ENCODE measurements at regions of chr18 and their contacts with region 1.

Region 1: DNA sequence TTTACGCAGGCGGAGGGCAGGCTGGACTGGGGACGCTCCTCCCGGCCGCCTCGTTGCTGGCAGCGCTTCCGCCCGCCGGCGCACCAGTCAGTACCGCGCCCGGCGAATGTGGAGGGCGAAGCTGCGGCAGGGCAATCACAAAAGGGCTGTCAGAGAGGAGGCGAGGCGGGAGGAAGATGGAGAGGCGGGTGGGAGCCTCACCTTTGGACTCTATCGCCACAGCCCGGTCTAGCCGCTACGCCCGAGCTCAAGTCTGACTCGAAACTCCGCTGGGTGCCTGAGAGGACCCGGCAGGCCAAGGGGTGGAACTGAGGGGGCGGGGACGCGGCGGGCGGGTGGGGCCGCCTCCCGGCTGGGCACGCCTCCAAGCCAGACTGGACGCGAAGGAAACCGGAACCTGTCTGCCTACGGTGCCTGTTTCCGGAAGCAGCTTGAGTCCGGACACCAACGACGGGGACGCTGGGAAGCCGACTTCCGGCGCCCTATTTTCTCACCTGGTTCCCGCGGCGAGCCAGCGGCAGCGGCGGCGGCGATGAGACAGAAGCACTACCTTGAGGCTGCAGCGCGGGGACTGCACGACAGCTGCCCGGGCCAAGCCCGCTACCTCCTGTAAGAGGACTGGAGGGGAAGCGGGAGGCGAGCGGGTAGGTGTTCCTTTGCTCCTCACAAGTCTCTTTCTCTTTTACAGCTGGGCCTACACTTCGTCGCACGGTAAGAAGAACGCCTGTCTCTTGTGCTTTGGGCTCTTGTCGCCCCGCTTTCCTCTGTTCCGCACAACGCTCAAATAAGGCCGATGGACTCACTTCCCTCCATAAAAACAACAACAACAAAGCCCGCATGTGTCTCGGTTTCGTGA is at the start of gene RMP24:
- DNase-seq: peak; percentile 96
- ATAC-seq: peak; percentile 98
- H3K4me3 ChIP-seq: peak within 1 kb of the TSS; percentile 91
- H3K27ac ChIP-seq: peak within 1 kb of the TSS; percentile 85
- H3K4me1 ChIP-seq: peaks cover 5% of the 10 kb centered on the region
- H3K27me3 ChIP-seq: no peaks in the 10 kb centered on the region
- CTCF ChIP-seq: no peak
- POLR2A ChIP-seq: peak; percentile 82
- RAD21 ChIP-seq: no peak

Region 2: DNA sequence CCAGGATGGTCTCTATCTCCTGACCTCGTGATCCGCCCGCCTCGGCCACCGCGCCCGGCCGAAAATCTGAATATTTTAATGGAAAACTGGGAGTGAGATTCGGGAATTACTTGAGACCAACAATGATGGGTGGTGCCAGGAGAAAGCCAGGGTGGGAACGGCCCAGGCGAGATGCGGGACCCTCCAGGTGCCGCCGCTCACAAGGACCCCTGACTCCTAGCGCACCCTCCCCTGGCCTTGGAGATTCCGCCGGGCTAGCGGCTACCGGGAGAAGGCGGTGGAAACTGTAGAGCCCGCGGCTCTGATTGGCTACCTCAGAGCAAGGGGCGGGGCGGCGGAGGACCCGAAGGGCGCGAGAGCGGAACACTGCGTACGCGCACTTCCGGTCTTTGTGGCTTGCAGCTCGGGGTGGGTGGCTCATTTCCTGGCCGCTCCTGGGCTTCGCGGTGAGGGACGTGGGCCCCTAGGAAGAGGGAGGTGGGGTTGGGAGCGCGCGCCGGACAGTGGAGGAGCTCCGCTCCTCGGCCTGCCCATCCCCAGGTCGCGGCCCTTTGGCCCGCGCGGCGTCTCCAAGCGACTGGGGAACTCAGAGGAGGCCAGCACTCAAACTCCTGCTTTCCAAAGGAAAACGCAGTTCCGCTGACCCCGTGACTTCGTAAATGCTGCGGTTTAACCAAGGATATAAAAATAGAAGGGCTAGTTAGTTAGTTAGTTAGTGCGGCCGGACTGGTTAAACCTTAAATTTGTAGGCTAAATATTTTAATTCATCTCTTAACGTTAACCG is 731.6 kb before region 1 on chr18 and contains the start of gene ZNF397:
- CTCF ChIA-PET with region 1: no interaction called
- POLR2A ChIA-PET with region 1: no interaction called
- dilution Hi-C with region 1: no loop called
- in situ Hi-C with region 1: loop called (anchors 25 kb)
- intact Hi-C with region 1: no loop called
- DNase-seq: peak; percentile 96
- ATAC-seq: peak; percentile 100
- H3K4me3 ChIP-seq: peak within 1 kb of the TSS; percentile 53
- H3K27ac ChIP-seq: peak within 1 kb of the TSS; percentile 96
- H3K4me1 ChIP-seq: peaks cover 2% of the 10 kb centered on the region; the same call in 1 of the 2 replicates
- H3K27me3 ChIP-seq: no peaks in the 10 kb centered on the region
- CTCF ChIP-seq: no peak
- POLR2A ChIP-seq: peak; percentile 96
- RAD21 ChIP-seq: no peak
- total RNA-seq, gene ZNF397: 9.9 and 11.1 TPM in 2 replicates

Region 3: DNA sequence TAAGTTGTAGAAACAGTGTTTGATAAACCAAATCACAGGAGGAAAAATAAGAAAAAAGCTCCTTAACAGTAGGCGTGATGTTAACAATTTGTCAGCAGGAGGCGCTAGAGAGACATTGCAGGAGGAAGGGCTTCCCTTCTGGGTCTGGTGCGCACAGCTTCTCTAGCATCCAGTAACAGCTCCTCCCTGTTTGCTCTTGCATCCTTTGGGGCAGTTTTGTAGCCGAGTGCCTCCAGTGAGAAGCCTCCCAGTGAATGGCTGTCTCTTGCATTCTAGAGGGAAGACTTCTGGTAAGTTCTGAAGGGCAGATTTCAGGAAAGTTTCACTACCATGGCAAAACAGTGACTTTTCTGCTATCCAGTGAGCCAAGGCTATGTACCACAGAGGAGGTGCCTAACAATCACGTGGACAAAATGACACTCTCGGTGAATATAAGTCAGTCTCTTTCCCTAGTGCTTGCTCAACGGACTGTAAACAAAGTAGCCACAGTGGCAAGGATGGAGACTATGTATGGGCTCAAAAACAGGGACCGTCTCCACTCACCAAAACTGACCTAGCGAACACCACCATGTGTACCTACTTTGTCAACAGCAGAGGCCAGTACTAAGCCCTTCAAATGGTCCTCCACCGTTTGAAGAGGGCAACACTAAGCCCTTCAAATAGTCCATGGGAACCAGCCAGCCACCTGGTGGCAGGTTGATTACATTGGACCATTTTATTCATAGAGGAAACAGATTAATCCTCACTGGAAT is 585.6 kb before region 1 on chr18:
- CTCF ChIA-PET with region 1: no interaction called
- POLR2A ChIA-PET with region 1: no interaction called
- dilution Hi-C with region 1: no loop called
- in situ Hi-C with region 1: loop called (anchors 25 kb)
- intact Hi-C with region 1: no loop called
- DNase-seq: peak; percentile 82
- ATAC-seq: peak; percentile 90
- H3K4me3 ChIP-seq: no peak overlapping the region
- H3K27ac ChIP-seq: no peak overlapping the region
- H3K4me1 ChIP-seq: no peaks in the 10 kb centered on the region; the same call in 1 of the 2 replicates
- H3K27me3 ChIP-seq: peaks cover 5% of the 10 kb centered on the region
- CTCF ChIP-seq: peak; percentile 89
- POLR2A ChIP-seq: no peak
- RAD21 ChIP-seq: peak; percentile 74

Region 4: DNA sequence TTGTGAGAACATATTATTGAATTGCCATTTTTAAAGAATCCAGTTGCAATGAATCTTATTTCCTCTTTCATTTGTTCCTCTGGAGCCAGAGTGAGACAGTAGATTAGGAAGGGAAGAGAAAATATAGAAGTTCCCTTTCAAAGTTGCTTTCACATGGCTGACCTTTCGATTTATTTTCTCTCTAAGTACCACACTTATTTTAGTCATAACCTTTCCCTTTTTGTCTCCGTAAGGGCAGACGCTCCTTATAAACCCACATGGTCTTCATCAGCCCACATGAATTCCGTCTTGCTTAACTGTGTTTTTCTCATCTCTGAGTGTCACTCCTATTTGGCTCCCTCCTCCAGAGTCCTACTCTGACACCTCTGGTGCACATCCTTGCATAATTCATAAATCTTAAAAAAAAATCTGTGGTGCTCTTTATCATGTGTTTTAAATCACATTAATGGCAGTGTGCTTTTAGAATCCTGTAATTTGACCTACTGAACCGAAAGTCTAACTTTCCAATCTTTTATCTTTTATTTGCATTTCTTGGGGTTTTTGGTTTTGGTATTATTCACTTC is 556.8 kb before region 1 on chr18:
- CTCF ChIA-PET with region 1: no interaction called
- POLR2A ChIA-PET with region 1: no interaction called
- dilution Hi-C with region 1: no loop called
- in situ Hi-C with region 1: no loop called
- intact Hi-C with region 1: no loop called
- DNase-seq: peak; percentile 5
- ATAC-seq: no peak; the same call in none of the 2 replicates
- H3K4me3 ChIP-seq: no peak overlapping the region
- H3K27ac ChIP-seq: no peak overlapping the region
- H3K4me1 ChIP-seq: no peaks in the 10 kb centered on the region
- H3K27me3 ChIP-seq: peaks cover 13% of the 10 kb centered on the region
- CTCF ChIP-seq: no peak
- POLR2A ChIP-seq: no peak
- RAD21 ChIP-seq: no peak

Region 5: GRCh38 chr18:35432565-35433001 is 539.8 kb before region 1 on chr18:
- CTCF ChIA-PET with region 1: no interaction called
- POLR2A ChIA-PET with region 1: interaction called, 12 read pairs
- dilution Hi-C with region 1: no loop called
- in situ Hi-C with region 1: no loop called
- intact Hi-C with region 1: no loop called
- DNase-seq: no peak
- ATAC-seq: no peak
- H3K4me3 ChIP-seq: no peak overlapping the region
- H3K27ac ChIP-seq: no peak overlapping the region
- H3K4me1 ChIP-seq: no peaks in the 10 kb centered on the region; the same call in 1 of the 2 replicates
- H3K27me3 ChIP-seq: peaks cover 2% of the 10 kb centered on the region
- CTCF ChIP-seq: no peak
- POLR2A ChIP-seq: no peak
- RAD21 ChIP-seq: no peak

Region 6: DNA sequence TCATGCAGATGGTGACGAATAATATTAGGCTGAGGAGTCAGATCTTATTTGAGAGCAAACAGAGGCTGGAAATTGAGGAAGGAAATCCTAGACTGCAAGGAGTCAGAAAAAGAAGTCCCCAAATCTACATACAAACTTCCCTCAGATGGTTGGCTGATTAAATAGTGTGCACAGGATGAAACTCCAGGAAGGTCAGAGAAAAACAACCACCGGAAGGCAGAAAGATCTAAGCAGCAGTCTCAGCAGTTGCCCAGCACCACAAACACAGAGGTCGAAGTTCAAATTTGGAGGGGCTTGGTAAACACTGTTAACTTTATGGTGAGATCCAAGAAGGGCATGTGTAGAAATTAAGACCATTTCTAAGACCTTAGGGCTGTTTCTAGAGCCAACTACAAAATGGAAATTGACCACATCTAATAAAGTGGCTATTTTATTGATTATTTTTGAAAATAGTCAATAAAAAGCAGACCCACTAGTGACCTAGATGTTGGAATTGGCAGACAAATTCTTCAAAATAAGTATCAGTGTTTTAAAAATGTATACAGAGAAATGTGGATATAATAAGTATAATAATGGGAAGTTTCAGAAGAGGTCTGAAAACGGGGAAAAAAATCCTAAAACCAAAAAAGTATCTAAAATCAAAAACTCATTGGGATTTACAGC is 256.1 kb before region 1 on chr18:
- CTCF ChIA-PET with region 1: no interaction called
- POLR2A ChIA-PET with region 1: interaction called, 10 read pairs
- dilution Hi-C with region 1: no loop called
- in situ Hi-C with region 1: no loop called
- intact Hi-C with region 1: no loop called
- DNase-seq: no peak
- ATAC-seq: no peak
- H3K4me3 ChIP-seq: no peak overlapping the region
- H3K27ac ChIP-seq: no peak overlapping the region
- H3K4me1 ChIP-seq: no peaks in the 10 kb centered on the region
- H3K27me3 ChIP-seq: no peaks in the 10 kb centered on the region
- CTCF ChIP-seq: no peak
- POLR2A ChIP-seq: no peak
- RAD21 ChIP-seq: no peak

Region 7: DNA sequence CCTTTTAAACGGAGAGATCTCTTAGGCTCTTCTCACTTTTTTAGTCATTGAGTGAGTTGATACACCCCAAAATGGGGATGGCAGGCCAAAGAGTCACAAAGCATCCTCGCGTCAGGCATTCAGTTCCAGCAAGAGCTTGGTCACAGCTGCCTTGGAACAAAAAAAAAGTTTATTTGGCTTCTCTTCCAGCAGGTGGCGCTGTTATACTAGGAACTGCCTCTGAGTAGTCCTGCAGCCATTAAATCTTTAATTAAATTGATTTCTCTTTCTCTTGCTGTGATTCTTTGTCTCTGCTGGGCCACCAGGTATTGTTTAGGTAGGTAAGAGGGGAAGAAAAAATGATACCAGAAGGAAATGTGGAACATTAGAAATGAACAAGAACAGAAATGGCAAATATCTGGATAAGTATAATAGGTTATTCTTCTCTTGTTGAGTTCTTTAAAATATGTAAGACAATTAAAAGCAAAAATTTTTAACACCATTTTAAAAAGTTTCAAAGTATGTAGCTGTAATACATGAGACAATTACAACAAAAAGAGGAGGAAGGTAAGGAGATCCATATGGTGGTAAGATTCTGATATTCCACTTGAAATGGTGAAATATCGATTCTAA is 215.8 kb before region 1 on chr18:
- CTCF ChIA-PET with region 1: no interaction called
- POLR2A ChIA-PET with region 1: no interaction called
- dilution Hi-C with region 1: no loop called
- in situ Hi-C with region 1: no loop called
- intact Hi-C with region 1: loop called (anchors 1 kb)
- DNase-seq: peak; percentile 59
- ATAC-seq: peak; percentile 84
- H3K4me3 ChIP-seq: no peak overlapping the region
- H3K27ac ChIP-seq: no peak overlapping the region
- H3K4me1 ChIP-seq: no peaks in the 10 kb centered on the region
- H3K27me3 ChIP-seq: peaks cover 32% of the 10 kb centered on the region
- CTCF ChIP-seq: peak; percentile 85
- POLR2A ChIP-seq: peak; percentile 35; the same call in 1 of the 2 replicates
- RAD21 ChIP-seq: peak; percentile 87

Region 8: DNA sequence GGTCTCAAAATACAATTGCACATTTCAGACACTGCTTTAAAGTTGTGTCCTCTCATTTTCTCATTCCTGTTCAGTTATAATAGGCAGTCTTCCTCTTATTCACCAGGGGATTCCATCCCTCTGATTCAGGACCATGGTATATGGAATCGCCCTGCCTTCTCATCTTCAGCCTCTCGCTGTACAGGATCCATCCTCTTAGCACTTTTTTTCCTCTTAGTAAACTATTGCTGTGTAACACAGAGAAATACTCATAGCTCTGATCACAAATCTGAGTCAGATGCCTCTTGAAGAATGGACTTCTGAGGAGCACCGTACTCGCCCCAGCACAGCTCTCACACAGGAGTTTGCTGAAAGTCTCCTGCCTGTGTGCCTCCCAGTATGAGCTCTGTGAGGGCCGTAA is 11.4 kb after region 1 on chr18:
- CTCF ChIA-PET with region 1: no interaction called
- POLR2A ChIA-PET with region 1: no interaction called
- dilution Hi-C with region 1: no loop called
- in situ Hi-C with region 1: no loop called
- intact Hi-C with region 1: no loop called
- DNase-seq: peak; percentile 94
- ATAC-seq: peak; percentile 90
- H3K4me3 ChIP-seq: no peak overlapping the region
- H3K27ac ChIP-seq: peak overlapping the region; percentile 60; the same call in 1 of the 2 replicates
- H3K4me1 ChIP-seq: peaks cover 11% of the 10 kb centered on the region
- H3K27me3 ChIP-seq: no peaks in the 10 kb centered on the region
- CTCF ChIP-seq: no peak
- POLR2A ChIP-seq: no peak
- RAD21 ChIP-seq: no peak

Measured in IMR-90 (cell line).